Activated CD8-positive, alpha-beta T cell treated with anti-CD3 and anti-CD28 coated beads, Interleukin-2, amount 10 ng/mL, durations not matched to agents 7 days and 5 days (primary cell): ENCODE measurements at regions of chrX and their contacts with region 1.

Region 1: DNA sequence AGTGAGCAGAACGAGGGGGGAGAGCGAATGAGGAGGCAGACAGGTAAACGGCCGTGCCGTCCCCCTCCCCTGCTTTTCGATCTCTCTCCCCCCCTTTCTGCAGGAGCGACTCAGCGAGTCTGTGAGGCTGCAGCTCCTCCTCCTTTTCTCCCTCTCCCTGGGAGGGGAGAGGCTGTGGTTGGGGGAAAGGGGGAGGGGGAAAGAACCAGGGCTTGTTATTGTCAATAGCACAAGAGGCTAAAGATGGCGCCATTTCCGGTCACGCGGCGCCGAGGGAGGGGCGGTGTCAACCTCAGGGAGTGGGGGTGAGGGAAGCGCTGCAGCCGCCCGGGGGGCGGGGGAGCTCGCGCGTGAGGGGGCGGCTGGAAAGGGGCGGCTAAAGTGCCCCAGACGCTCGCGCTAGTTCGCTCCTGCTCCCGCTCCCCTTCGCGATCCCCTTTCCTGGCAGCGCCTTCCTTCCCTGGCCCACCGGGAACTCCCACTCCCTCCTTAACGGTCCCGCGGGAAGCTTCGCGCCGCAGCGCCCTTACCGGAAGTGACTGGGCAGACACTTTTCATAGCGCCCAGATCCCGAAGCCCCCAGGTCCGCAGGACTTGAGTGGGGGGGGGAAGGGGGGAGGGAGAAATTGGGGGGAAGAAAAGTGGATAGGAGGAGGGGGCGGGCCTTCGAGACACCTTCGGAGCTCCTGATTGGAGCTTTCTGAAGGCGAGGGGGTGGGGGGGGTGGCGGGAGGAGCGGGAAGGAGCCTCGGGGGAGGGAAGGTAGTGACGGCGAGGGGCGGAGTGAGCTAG is at the start of gene CUL4B:
- DNase-seq: peak; percentile 94
- ATAC-seq: peak; percentile 91
- H3K4me3 Mint-ChIP-seq: peak within 1 kb of the TSS; percentile 99
- H3K27ac Mint-ChIP-seq: peak within 1 kb of the TSS; percentile 99
- H3K4me1 Mint-ChIP-seq: peaks cover 27% of the 10 kb centered on the region
- H3K27me3 Mint-ChIP-seq: no peaks in the 10 kb centered on the region
- total RNA-seq, gene CUL4B: 29.3 to 31.4 TPM

Region 2: DNA sequence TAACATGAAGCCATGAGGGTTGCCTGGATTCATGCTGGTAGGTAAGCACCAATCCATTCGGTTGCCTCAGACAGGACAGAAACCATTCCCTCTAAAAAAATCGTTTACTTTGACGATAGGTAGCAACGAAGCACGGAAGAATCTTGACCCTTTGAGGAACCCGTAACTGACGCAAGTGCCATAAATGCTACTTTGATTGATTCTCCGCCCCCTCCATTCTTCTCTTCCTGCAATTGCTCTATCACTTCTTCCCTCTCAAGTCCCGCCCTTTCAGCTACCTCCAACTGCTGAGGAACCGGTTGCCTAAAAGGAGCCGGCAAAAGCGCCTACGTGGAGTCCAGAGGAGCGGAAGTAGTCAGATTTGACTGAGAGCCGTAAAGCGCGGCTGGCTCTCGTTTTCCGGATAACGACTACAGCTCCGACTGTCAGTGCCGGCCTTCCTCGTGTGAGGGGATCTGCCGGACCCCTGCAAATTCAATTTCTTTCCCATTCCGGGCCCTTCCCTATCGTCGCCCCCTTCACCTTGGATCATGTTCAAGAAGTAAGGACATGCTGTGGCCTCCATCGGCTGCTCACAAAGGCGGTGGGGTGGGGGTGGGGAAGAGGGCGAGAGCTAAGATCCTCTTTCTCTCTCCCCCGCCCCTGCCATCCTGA is 42.8 kb after region 1 on chrX and contains the start of gene MCTS1:
- CTCF ChIA-PET with region 1: interaction called, 19 read pairs
- POLR2A ChIA-PET with region 1: interaction called, 47 read pairs
- DNase-seq: peak; percentile 91
- ATAC-seq: peak; percentile 99
- H3K4me3 Mint-ChIP-seq: peak within 1 kb of the TSS; percentile 95
- H3K27ac Mint-ChIP-seq: peak within 1 kb of the TSS; percentile 99
- H3K4me1 Mint-ChIP-seq: peaks cover 8% of the 10 kb centered on the region
- H3K27me3 Mint-ChIP-seq: no peaks in the 10 kb centered on the region
- total RNA-seq, gene MCTS1: 56.0 to 60.5 TPM

Region 3: GRCh38 chrX:120697053-120697452 is 136.0 kb after region 1 on chrX:
- CTCF ChIA-PET with region 1: interaction called, 3 read pairs
- POLR2A ChIA-PET with region 1: interaction called, 10 read pairs
- DNase-seq: peak; percentile 75
- ATAC-seq: peak; percentile 94
- H3K4me3 Mint-ChIP-seq: peak overlapping the region; percentile 2
- H3K27ac Mint-ChIP-seq: peak overlapping the region; percentile 81
- H3K4me1 Mint-ChIP-seq: peaks cover 25% of the 10 kb centered on the region
- H3K27me3 Mint-ChIP-seq: no peaks in the 10 kb centered on the region